Activated CD4-positive, alpha-beta T cell treated with anti-CD3 and anti-CD28 coated beads, Interleukin-2, amount 10 ng/mL, durations not matched to agents 24 days and 14 days (primary cell): ENCODE measurements at regions of chr6 and their contacts with region 1.

Region 1: DNA sequence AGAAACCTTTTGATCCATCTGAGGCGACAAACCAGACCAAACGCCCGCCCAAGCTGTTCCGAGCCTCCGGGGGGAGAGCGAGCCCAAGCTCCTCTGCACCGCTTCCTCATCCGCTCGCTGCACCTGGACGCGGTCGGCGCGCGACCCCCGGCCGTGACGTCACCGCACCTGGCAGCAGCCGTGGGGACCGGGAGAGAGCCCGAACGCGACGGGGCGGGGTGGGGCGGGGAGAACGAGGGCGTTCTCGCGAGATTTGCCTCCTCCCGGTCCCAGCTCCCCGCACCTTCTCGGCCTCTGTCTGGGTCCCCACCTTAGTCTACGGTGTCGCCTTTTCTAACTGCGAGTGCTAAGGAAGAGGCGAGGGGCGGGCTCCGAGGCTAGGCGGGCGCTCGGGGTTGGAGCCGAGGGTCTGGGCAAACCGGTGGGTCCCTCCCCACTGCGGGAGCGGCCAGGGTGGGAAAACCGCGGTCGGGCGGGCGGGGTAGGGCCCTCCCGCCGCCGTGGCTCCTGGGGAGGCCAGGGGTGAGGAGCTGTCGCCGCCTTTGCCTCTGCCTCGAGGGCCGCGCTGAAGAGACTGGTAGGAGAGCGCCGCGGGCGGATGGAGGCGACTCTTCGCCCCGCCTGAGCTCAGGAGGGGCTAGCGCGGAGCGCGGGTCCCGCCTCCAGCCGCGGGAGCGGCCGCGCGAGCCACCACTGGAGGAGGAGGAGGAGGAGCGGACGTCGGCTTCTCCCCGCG is at the start of gene CD2AP:
- DNase-seq: peak; percentile 95
- H3K4me3 Mint-ChIP-seq: peak within 1 kb of the TSS; percentile 95
- H3K27ac Mint-ChIP-seq: peak within 1 kb of the TSS; percentile 95
- H3K4me1 Mint-ChIP-seq: peaks cover 23% of the 10 kb centered on the region
- H3K27me3 Mint-ChIP-seq: no peaks in the 10 kb centered on the region
- total RNA-seq, gene CD2AP: 26.3 and 29.6 TPM in 2 replicates

Region 2: GRCh38 chr6:47512872-47513271 is 35.2 kb after region 1 on chr6:
- intact Hi-C with region 1: loop called (anchors 1 kb)
- DNase-seq: no peak
- H3K4me3 Mint-ChIP-seq: no peak overlapping the region
- H3K27ac Mint-ChIP-seq: no peak overlapping the region
- H3K4me1 Mint-ChIP-seq: peaks cover 16% of the 10 kb centered on the region
- H3K27me3 Mint-ChIP-seq: no peaks in the 10 kb centered on the region

Region 3: DNA sequence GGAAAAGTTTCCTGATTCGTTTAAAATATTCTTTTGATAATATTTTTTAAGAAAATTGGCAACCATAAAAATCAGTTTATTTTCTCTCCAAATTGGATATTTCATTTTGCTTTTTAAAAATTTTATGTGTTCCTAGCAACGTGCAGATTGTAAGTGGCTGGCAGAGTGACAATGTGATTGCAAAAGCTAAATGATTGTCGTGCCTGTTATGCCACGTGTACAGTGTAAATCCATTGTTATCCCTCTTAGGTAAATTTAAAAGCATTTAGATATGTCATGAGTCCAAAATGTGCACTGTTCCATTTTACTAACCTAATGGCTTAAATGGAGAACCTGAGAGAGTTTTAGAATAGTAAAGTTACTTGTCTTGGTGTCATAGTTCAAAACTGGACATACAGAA is 126.3 kb after region 1 on chr6:
- intact Hi-C with region 1: loop called (anchors 10 kb)
- DNase-seq: no peak
- H3K4me3 Mint-ChIP-seq: no peak overlapping the region
- H3K27ac Mint-ChIP-seq: no peak overlapping the region
- H3K4me1 Mint-ChIP-seq: peaks cover 9% of the 10 kb centered on the region
- H3K27me3 Mint-ChIP-seq: no peaks in the 10 kb centered on the region